ENCODE measurements at regions of chr3 and their contacts with region 1.

Region 1: DNA sequence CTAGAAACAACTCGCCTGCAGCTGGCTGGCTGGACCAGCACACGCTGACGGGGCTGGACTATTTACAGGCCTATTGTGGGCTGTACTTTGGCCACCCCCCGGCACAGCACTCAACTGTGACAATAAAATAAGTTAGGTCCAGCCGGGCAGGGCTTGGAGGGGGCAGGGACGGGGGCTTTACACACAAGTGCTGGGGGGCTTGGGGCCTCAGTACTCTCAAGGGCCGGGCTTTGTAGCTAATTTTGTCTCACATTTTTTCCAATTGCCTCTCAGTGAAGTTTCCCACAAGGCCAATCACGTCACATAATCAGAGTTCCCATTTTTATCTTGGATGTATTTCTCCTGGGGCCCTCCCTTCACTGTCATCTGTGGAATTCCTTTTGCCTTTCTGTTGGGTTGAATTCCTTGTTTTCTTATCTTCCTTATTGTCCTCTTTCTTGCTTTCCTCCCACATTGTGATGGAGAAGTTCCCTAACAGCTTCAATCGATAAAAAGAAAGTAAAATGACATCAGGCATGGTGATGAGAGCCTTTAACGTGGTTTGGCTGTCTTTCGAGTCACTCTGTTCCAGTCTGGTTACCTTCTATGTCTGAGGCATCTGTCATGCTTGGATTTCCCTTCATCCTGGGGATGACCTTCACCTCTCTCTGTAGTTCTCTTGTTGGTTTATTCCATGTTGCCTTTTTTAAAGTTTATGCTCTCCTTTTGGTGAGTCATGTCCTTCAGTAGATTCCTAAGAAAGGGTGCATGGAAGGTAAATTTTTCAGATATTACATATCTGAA is 44.1 kb upstream of the CMTM7 start:
- DNase-seq: peak; percentile 66 to 78
- H3K4me3 ChIP-seq: no peak overlapping the region; the same call in 1 of the 2 replicates
- H3K4me3 Mint-ChIP-seq: peak overlapping the region; percentile 79
- H3K27ac Mint-ChIP-seq: peak overlapping the region; percentile 89
- H3K4me1 ChIP-seq: peaks cover 39% of the 10 kb centered on the region
- H3K4me1 Mint-ChIP-seq: peaks cover 25% of the 10 kb centered on the region
- H3K27me3 ChIP-seq: no peaks in the 10 kb centered on the region
- H3K27me3 Mint-ChIP-seq: no peaks in the 10 kb centered on the region
- CTCF ChIP-seq: no peak

Region 2: DNA sequence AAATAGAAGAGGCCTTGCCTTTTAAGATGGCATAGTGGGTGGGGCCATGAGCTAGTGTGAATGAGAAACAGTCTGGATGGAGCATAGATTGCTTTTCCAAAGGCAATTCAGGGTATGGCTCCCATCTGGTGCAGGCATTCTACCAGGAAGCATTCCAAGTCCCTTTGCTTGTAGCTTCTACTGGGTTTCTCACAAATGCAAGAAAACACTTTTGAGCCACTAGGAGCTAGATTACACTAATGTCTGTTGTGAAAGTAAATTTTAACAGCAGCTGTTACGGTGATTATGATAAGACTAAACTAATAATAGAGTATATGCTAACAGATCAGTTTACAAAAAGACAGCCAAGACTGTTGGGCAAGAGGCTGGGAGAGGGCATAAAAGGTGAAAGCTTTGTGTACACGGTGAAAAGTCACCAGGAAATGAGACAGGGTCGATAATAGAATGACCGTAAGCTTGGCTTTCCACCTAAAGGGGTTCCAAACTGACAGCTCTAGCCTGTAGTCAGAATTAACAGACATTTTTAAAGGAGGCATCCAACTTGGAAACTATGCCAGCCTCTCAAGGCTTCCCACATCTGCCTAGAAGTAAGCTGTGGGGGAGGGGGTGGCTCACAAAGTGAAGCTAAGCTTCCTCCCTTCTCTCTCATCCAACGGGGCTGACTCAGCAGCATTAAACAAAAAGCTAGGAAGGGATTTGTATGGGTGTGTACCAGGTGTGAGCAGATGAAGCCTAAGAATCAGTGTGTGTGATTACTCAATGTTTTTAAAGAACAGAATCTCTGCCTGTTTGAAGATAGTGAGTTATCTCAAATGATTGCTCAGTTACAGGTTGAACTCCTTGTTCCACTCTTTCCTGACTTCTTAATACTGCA is 302.2 kb before region 1 on chr3:
- CTCF ChIA-PET with region 1: no interaction called
- POLR2A ChIA-PET with region 1: no interaction called
- intact Hi-C with region 1: no loop called
- DNase-seq: peak; percentile 64
- H3K4me3 ChIP-seq: no peak overlapping the region
- H3K4me3 Mint-ChIP-seq: peak overlapping the region; percentile 49
- H3K27ac Mint-ChIP-seq: peak overlapping the region; percentile 58
- H3K4me1 ChIP-seq: peaks cover 22% of the 10 kb centered on the region
- H3K4me1 Mint-ChIP-seq: peaks cover 17% of the 10 kb centered on the region
- H3K27me3 ChIP-seq: no peaks in the 10 kb centered on the region
- H3K27me3 Mint-ChIP-seq: no peaks in the 10 kb centered on the region
- CTCF ChIP-seq: no peak

Region 3: GRCh38 chr3:32082721-32083120 is 264.8 kb before region 1 on chr3:
- CTCF ChIA-PET with region 1: no interaction called
- POLR2A ChIA-PET with region 1: no interaction called
- intact Hi-C with region 1: no loop called
- DNase-seq: no peak
- H3K4me3 ChIP-seq: no peak overlapping the region
- H3K4me3 Mint-ChIP-seq: peak overlapping the region; percentile 15
- H3K27ac Mint-ChIP-seq: no peak overlapping the region
- H3K4me1 ChIP-seq: peaks cover 17% of the 10 kb centered on the region
- H3K4me1 Mint-ChIP-seq: peaks cover 18% of the 10 kb centered on the region
- H3K27me3 ChIP-seq: no peaks in the 10 kb centered on the region
- H3K27me3 Mint-ChIP-seq: no peaks in the 10 kb centered on the region
- CTCF ChIP-seq: no peak

Region 4: GRCh38 chr3:32316319-32316718 is 31.2 kb before region 1 on chr3:
- CTCF ChIA-PET with region 1: no interaction called
- POLR2A ChIA-PET with region 1: no interaction called
- intact Hi-C with region 1: loop called (anchors 2 kb)
- DNase-seq: no peak
- H3K4me3 ChIP-seq: no peak overlapping the region
- H3K4me3 Mint-ChIP-seq: no peak overlapping the region
- H3K27ac Mint-ChIP-seq: no peak overlapping the region
- H3K4me1 ChIP-seq: peaks cover 25% of the 10 kb centered on the region
- H3K4me1 Mint-ChIP-seq: peaks cover 28% of the 10 kb centered on the region
- H3K27me3 ChIP-seq: no peaks in the 10 kb centered on the region
- H3K27me3 Mint-ChIP-seq: no peaks in the 10 kb centered on the region
- CTCF ChIP-seq: no peak

Region 5: GRCh38 chr3:32401556-32402081 is 54.1 kb after region 1 on chr3:
- CTCF ChIA-PET with region 1: no interaction called
- POLR2A ChIA-PET with region 1: no interaction called
- intact Hi-C with region 1: loop called (anchors 2 kb)
- DNase-seq: peak; percentile 44 to 59
- H3K4me3 ChIP-seq: peak overlapping the region; percentile 33
- H3K4me3 Mint-ChIP-seq: peak overlapping the region; percentile 62
- H3K27ac Mint-ChIP-seq: peak overlapping the region; percentile 55
- H3K4me1 ChIP-seq: peaks cover 15% of the 10 kb centered on the region; the same call in 1 of the 2 replicates
- H3K4me1 Mint-ChIP-seq: peaks cover 25% of the 10 kb centered on the region
- H3K27me3 ChIP-seq: no peaks in the 10 kb centered on the region
- H3K27me3 Mint-ChIP-seq: no peaks in the 10 kb centered on the region
- CTCF ChIP-seq: no peak

Measured in Caco-2 (cell line).